Activated T-helper 1 cell treated with anti-CD3 and anti-CD28 coated beads, Interleukin-12 subunit alpha, Interleukin-12 subunit beta, Interleukin-2, Interleukin-4 antibody, amounts not matched to agents 30 ng/mL and 10 ng/mL and 1 ng/mL, durations not matched to agents 14 hours and 24 hours and 36 hours (primary cell): ENCODE measurements at regions of chr6 and their contacts with region 1.

Region 1: DNA sequence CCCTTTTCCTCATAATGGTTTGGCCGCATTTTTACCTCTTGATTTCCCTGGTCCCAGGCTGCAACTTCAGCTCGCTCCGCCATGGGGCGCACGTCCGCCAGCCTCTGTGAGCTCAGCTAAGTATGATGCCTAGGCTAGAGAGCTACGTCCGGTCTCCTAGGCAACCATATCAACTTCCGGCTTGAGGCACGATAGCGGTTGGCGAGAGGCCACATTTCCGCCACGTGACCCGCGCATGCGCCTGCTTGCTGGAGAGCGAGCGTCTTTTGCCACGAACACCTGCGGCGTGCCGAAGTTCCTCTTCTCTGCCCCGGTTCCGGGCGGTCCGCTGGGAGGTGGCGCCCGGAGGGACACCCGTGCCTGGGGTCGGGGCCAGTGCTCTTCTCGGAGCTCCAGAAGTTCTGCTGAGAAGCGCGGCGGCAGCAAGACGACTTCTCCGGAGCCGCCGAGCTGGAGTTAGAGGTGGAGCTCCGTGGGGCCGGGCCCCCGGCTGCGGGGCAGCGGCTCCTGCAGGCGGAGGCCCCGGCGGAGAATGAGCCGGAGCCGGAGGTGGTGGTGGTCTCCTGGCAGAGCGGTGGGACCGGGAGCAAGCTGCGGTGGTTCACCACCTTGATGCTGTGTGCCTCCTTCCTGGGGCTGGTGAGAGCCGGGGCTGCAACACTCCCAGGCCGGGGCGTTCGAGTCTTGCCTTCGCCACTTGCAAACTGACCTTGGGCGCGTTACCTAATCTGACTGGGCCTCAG is 172.0 kb downstream of the SLC16A10 start:
- DNase-seq: peak; percentile 99
- H3K4me3 Mint-ChIP-seq: peak overlapping the region; percentile 81
- H3K27ac Mint-ChIP-seq: peak overlapping the region; percentile 87
- H3K4me1 Mint-ChIP-seq: peaks cover 34% of the 10 kb centered on the region
- H3K27me3 Mint-ChIP-seq: peaks cover 5% of the 10 kb centered on the region

Region 2: GRCh38 chr6:111171577-111172400 is 87.5 kb before region 1 on chr6:
- intact Hi-C with region 1: no loop called
- DNase-seq: no peak
- H3K4me3 Mint-ChIP-seq: no peak overlapping the region
- H3K27ac Mint-ChIP-seq: no peak overlapping the region
- H3K4me1 Mint-ChIP-seq: peaks cover 11% of the 10 kb centered on the region
- H3K27me3 Mint-ChIP-seq: peaks cover 5% of the 10 kb centered on the region

Region 3: DNA sequence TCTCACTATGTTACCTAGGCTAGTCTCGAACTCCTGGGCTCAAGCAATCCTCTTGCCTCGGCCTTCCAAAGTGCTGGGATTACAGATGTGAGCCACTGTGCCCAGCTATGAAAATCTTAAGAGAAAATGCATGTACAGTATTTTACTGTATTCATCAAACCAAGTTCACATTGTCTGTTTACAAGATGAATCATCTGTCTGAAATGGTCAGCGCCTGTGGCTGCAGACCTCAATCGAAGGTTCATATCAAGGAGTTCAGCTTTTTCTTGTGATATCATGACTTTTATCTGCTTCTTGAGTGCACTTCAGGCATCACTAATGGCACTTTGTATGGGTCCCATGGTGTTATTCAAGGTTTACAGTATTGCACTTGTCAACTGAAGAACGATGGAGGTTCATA is 16.8 kb before region 1 on chr6:
- intact Hi-C with region 1: no loop called
- DNase-seq: no peak
- H3K4me3 Mint-ChIP-seq: no peak overlapping the region
- H3K27ac Mint-ChIP-seq: no peak overlapping the region
- H3K4me1 Mint-ChIP-seq: no peaks in the 10 kb centered on the region
- H3K27me3 Mint-ChIP-seq: peaks cover 6% of the 10 kb centered on the region

Region 4: DNA sequence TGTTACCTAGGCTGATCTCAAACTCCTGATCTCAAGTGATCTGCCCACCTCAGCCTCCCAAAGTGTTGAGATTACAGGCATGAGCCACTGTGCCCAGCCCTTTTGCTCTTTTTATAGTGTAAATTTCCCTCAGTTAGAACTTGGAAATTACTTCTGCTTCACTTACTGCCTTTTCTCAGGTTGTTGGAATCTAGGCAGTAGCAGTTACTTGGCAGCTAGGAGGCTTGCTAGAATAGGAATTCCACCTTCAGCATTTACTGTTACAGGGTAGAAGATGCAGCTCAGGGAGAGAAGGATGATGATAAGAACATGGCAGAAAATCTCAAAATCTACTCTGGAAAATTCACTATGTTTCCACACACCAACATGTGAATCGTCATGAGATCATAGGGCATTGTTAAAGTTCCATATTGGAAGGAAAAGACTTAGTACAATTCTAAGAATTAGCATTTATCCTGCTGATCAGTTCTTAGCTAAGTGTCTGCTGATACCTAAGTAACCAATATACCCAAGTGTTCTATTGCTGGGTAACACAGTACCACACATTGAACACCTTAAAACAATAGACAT is 10.2 kb after region 1 on chr6:
- intact Hi-C with region 1: no loop called
- DNase-seq: no peak
- H3K4me3 Mint-ChIP-seq: no peak overlapping the region
- H3K27ac Mint-ChIP-seq: no peak overlapping the region
- H3K4me1 Mint-ChIP-seq: peaks cover 5% of the 10 kb centered on the region
- H3K27me3 Mint-ChIP-seq: no peaks in the 10 kb centered on the region

Region 5: GRCh38 chr6:111280445-111280955 is 21.2 kb after region 1 on chr6:
- intact Hi-C with region 1: no loop called
- DNase-seq: no peak
- H3K4me3 Mint-ChIP-seq: no peak overlapping the region
- H3K27ac Mint-ChIP-seq: no peak overlapping the region
- H3K4me1 Mint-ChIP-seq: peaks cover 7% of the 10 kb centered on the region
- H3K27me3 Mint-ChIP-seq: no peaks in the 10 kb centered on the region

Region 6: GRCh38 chr6:111338843-111339242 is 79.6 kb after region 1 on chr6:
- intact Hi-C with region 1: loop called (anchors 1 kb)
- DNase-seq: no peak
- H3K4me3 Mint-ChIP-seq: no peak overlapping the region
- H3K27ac Mint-ChIP-seq: peak overlapping the region; percentile 15
- H3K4me1 Mint-ChIP-seq: peaks cover 12% of the 10 kb centered on the region
- H3K27me3 Mint-ChIP-seq: no peaks in the 10 kb centered on the region

Region 7: DNA sequence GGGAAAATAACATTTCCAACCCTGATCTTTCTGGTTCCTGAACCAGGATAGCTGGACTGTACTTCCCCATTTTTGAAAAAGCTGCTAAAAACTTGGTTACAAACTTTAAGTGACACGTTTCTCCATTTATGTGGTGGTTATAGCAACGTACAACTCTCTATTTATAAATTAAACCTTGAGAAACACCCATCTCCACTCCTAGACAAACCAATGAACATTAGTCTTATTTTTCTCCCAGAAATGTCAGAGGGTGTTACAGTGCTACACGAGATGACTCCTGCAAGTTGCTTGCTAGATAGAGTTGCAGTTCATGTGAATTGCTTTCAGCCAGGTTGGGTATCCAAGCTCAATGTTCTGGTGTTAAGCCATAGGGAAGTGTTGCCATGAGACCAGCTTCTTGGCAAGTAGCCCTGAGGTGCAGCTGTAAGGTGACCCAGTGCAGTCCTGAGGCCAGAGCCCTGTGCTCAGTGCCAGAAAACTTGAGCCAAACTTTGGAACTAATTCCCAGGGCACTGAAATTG is 275.0 kb after region 1 on chr6:
- intact Hi-C with region 1: loop called (anchors 1 kb)
- DNase-seq: no peak
- H3K4me3 Mint-ChIP-seq: no peak overlapping the region
- H3K27ac Mint-ChIP-seq: no peak overlapping the region
- H3K4me1 Mint-ChIP-seq: peaks cover 49% of the 10 kb centered on the region
- H3K27me3 Mint-ChIP-seq: no peaks in the 10 kb centered on the region

Region 8: DNA sequence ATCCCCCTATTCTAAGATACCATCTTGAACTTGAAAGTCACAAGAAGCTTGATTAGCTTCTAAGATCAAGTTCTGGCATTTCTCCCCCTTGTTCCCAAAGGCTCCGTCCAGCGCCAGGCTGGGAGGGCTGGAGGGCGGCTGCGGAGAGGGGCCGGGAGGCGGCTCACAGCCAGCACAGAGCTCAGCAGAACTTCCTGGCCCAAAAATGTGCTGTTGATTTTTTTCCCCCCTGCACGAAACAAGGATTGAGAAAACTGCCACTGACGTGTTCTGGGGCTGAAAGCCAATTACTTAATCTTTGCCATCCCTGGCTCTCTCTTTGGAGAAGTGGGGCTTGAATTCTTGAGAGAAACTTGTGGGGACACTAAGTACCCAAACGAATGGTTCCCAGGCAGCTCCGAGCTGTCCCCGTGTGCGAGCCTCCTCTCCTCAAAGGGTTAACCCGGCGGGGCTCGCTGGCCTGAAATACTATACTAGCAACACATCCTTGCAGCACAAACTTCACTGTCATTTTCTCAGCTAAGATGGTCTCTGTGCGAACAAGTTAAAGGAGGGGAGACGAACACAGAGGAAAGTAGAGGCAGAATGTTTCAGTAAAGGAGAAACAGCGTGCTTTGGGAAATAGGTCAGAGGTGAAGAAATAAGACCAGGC is 346.0 kb after region 1 on chr6:
- intact Hi-C with region 1: loop called (anchors 1 kb)
- DNase-seq: peak; percentile 11
- H3K4me3 Mint-ChIP-seq: peak overlapping the region; percentile 90
- H3K27ac Mint-ChIP-seq: peak overlapping the region; percentile 100
- H3K4me1 Mint-ChIP-seq: peaks cover 56% of the 10 kb centered on the region
- H3K27me3 Mint-ChIP-seq: no peaks in the 10 kb centered on the region

Region 9: DNA sequence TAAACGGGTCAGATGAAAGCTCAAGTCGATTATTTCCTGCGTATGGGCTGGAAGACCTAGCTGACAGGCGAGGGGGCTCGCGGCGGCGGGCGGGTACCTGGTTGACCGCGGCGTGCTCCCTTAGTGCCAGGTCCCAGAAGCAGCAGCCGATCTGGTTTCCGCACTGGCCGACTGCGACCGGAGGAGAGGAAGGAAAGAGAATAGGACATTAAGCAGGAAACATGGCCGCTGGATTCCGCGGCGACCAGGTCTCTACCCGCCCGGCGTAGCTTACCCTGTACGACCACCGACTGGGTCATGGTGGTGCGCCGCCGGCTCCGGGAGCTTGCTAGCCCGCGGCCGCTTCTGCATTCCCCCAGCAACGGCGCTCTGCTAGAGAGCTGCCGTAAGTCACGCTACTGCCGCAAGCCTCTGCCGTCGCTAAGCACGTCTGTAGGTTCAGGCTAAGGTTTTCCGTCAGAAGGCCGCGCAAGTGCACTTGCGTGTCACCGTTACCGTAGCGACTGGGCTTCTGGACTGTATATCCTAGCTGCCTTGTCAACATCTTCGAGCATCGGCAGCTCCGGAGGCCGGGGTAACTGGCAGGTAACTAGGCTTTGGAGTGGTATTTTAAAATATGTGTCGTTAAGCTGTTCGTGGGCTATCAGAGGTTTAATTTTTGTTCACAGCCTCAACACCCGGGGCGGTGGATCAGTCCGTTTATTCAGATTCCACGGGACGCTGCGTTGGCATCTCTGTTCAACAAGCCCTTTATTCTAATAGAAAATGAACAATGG is 828.1 kb after region 1 on chr6 and contains the starts of genes FAM229B and TUBE1:
- intact Hi-C with region 1: loop called (anchors 1 kb)
- DNase-seq: peak; percentile 86
- H3K4me3 Mint-ChIP-seq: no peak within 1 kb of the TSS
- H3K27ac Mint-ChIP-seq: no peak within 1 kb of the TSS
- H3K4me1 Mint-ChIP-seq: no peaks in the 10 kb centered on the region
- H3K27me3 Mint-ChIP-seq: peaks cover 14% of the 10 kb centered on the region
- total RNA-seq, gene FAM229B: 1.1 and 2.2 TPM in 2 replicates
- total RNA-seq, gene TUBE1: 24.4 and 26.2 TPM in 2 replicates